Activated CD4-positive, alpha-beta memory T cell treated with anti-CD3 and anti-CD28 coated beads for 36 hours (primary cell): ENCODE measurements at regions of chr6 and their contacts with region 1.

Region 1: DNA sequence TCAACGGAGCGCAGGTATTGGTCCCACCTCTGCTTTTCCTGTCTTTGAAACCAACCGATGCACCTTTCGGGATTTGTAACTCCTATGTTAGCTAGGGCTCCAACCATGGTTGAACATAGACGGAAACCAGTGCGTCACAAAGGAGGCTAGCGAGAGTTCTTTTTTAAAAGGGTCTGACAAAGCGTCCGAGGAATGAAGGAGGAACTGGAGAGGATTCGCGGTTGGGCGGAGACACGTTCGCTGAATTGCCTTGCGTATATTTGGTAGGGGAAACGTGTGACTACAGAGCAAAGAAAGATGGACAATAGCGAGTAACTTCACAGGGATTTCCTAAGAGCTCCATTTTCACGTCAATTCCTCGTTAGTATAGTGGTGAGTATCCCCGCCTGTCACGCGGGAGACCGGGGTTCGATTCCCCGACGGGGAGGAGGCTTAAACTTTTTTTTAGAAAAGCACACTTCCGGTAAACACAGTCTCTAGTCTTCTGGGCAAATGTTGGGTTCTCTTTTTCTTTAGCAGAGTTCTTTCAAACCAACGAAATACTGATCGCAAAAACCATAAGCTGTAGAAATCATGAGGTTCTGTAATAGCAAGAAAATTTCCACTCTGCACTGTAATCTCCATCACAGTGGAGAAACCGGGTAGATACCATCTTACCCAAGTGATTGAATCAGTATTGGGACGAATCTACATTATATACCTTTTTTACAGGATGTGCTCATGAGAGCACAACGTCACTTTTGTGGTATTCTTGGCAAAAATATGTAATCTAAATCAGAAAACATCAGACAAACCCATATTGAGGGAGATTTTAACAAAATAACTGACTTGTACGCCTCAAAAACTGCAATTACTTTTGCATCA is 6.6 kb upstream of the ZNF184 start:
- DNase-seq: peak; percentile 89
- H3K4me3 Mint-ChIP-seq: no peak overlapping the region
- H3K27ac Mint-ChIP-seq: no peak overlapping the region
- H3K4me1 Mint-ChIP-seq: peaks cover 5% of the 10 kb centered on the region
- H3K27me3 Mint-ChIP-seq: no peaks in the 10 kb centered on the region

Region 2: DNA sequence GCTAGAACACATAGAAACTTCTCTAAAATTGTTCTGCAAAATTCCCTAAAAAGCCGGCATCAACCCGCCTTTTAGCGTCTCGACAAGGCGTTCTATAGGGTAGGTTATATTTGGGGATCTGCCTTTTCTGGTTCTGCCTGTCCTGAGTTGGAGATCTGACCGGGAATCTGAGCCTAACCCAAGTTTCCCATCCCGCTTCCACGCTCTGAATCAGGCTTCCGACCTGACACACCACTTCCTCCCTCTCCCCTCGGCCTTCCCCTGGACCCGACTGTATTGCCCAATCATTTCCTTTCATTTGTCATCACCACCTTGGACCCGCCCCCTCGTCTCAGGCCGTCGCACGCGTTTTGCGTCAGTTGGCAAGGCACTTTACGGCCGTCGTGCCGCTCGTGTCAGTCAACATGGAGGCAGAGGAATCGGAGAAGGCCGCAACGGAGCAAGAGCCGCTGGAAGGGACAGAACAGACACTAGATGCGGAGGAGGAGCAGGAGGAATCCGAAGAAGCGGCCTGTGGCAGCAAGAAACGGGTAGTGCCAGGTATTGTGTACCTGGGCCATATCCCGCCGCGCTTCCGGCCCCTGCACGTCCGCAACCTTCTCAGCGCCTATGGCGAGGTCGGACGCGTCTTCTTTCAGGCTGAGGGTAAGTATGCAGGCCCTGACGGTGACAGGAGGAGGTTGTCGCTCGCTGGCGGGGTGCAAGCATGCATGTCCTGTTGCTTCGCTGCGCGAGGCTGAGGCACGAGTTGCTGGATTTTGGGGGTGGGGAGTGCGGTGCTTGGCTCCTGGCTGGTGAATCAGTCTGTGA is 882.8 kb before region 1 on chr6 and contains the start of gene ABT1:
- CTCF ChIA-PET with region 1: no interaction called
- POLR2A ChIA-PET with region 1: no interaction called
- intact Hi-C with region 1: loop called (anchors 5 kb)
- DNase-seq: peak; percentile 98
- H3K4me3 Mint-ChIP-seq: no peak within 1 kb of the TSS
- H3K27ac Mint-ChIP-seq: no peak within 1 kb of the TSS
- H3K4me1 Mint-ChIP-seq: peaks cover 44% of the 10 kb centered on the region
- H3K27me3 Mint-ChIP-seq: peaks cover 26% of the 10 kb centered on the region
- total RNA-seq, gene ABT1: 22.6 to 22.7 TPM

Region 3: DNA sequence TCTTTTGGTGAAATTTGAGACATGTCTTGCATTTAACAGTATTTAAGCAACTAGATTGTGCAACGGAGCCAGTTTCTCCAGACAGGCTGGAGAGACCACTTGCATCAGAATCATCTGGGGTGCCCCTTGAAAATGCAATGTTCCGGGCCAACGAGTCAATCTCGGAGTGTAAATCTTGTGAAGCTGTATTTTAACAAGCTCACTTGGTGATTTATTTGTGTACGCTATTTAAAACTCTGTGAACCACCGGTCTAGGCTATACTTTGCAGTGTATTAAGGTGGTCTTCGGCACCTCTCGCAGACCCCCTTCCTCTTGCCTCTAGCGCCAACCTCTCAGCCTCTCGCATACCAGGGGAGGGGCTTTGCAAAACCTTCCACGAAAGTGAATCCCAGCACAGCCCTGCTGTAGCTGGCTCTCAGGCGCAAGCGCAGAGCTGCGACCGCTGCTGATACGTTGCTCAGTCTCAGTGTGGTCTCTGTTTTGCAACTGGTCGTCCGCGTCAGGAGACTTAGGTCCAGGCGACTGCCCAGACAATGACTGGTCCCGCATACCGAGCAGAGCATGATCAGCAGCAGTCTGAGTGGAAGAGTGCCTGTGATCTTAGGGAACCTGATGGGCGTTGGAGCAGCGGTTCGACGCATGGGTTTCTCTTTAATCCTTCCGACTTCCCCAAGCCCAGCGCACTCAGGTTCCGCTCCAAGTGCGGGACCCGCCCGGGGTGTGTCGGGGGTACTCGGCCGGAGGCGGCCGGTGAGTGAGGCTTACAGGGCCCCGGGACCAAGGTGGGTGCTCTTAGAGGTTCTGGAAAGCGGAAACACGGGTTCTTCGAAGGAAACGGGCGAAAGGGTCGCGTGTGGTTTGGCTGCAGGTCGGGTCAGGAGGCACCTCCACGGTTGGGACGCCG is 91.0 kb before region 1 on chr6 and contains the start of gene ZNF391:
- CTCF ChIA-PET with region 1: no interaction called
- POLR2A ChIA-PET with region 1: interaction called, 4 read pairs
- intact Hi-C with region 1: loop called (anchors 2 kb)
- DNase-seq: peak; percentile 78
- H3K4me3 Mint-ChIP-seq: peak within 1 kb of the TSS; percentile 93
- H3K27ac Mint-ChIP-seq: peak within 1 kb of the TSS; percentile 91
- H3K4me1 Mint-ChIP-seq: peaks cover 10% of the 10 kb centered on the region
- H3K27me3 Mint-ChIP-seq: no peaks in the 10 kb centered on the region
- total RNA-seq, gene ZNF391: 2.8 to 3.2 TPM

Region 4: DNA sequence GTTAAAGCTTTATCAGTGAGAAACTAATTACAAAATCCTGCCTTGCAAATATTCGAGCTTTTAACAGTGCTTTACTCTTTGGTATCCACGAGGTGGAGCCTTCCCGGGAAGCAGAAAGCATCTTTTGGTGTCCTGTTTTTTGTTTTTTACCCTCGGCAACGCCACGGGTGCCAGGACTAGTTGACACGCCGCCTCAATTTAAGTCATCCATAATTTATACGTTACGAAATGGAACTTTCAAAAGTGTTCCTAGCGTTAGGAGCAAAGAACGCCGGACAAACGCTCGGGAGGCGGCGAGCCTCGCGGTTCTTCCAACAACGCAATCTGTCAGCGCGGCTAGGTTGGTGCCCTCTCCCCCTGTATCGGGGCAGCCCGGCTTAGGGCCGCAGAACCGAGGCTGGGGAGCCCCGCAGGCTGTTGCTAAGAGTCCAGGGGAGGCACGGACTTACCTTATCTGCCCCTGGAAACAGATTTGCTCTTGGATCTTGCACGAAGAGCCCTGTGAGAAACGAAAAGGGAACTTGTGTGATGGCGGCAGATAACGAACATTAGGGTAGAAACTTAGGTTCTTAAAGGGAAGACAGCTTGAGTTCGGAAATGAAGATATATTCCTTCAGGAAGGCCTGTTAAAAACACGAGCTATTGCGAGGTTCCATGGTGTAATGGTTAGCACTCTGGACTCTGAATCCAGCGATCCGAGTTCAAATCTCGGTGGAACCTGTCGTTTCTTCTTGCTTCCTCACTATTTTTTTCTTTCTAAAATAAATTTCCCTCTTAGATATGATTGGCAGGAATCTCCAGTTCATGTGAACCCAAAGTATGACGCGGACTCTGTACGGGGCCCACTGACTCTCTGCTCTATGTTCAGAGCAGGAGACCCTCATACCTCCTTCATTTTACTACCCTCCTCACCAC is 39.6 kb after region 1 on chr6:
- CTCF ChIA-PET with region 1: interaction called, 7 read pairs
- POLR2A ChIA-PET with region 1: no interaction called
- intact Hi-C with region 1: loop called (anchors 1 kb)
- DNase-seq: peak; percentile 70
- H3K4me3 Mint-ChIP-seq: peak overlapping the region; percentile 79
- H3K27ac Mint-ChIP-seq: peak overlapping the region; percentile 77
- H3K4me1 Mint-ChIP-seq: peaks cover 19% of the 10 kb centered on the region
- H3K27me3 Mint-ChIP-seq: peaks cover 17% of the 10 kb centered on the region

Region 5: DNA sequence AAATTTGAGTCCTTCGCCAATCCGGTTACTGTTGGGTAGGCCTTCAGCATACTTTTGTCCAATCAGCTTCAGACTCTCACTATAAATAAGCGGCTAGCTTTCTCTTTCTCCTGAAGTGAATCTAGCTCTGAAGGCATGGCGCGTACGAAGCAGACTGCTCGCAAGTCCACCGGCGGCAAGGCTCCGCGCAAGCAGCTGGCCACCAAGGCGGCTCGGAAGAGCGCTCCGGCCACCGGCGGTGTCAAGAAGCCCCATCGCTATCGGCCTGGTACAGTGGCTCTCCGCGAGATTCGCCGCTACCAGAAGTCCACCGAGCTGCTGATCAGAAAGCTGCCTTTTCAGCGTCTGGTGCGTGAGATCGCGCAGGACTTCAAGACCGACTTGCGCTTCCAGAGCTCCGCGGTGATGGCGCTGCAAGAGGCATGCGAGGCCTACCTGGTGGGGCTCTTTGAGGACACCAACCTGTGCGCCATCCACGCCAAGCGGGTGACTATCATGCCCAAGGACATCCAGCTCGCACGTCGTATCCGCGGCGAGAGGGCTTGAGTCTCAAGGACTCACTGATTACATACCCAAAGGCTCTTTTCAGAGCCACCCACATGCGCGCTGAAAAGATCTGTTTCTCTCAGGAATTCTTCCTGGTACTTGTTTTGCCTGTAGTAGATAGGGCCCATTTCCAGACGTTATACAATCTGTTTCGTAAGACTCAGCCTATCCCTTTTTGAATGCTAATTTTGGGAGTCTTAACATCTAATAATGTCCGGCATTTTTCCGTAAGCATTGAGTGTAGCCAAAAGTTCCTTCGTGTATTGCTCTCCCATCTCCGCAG is 330.6 kb after region 1 on chr6:
- CTCF ChIA-PET with region 1: no interaction called
- POLR2A ChIA-PET with region 1: interaction called, 4 read pairs
- intact Hi-C with region 1: loop called (anchors 5 kb)
- DNase-seq: peak; percentile 82
- H3K4me3 Mint-ChIP-seq: peak overlapping the region; percentile 85
- H3K27ac Mint-ChIP-seq: peak overlapping the region; percentile 96
- H3K4me1 Mint-ChIP-seq: peaks cover 61% of the 10 kb centered on the region
- H3K27me3 Mint-ChIP-seq: peaks cover 4% of the 10 kb centered on the region

Region 6: DNA sequence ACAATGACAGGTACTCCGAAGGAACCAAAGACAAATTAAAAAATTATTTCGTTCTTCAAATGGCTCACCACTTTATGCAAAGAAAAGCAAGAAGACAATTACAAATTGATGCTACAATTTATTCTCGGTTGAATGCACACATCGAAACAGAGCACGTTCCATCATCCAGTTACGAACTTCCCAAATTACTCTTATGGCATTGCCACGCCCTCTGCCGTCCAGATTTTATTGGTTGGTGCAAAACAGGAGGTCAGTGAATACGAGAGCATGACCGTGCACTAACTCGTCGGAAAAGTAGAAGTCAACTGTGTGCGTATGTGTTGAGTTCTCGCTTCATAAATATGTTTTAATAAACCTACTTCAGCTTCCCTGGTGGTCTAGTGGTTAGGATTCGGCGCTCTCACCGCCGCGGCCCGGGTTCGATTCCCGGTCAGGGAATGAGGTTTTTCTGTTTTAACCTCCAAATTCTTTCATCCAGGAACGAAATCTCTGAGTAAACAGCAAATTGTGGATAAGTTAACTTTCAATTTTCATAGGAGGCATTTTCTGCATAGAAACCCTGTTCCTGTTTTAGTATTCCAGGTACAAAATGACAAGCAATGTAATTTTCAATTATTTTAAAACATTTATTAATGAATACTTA is 1502.4 kb after region 1 on chr6:
- CTCF ChIA-PET with region 1: no interaction called
- POLR2A ChIA-PET with region 1: no interaction called
- intact Hi-C with region 1: loop called (anchors 2 kb)
- DNase-seq: peak; percentile 80
- H3K4me3 Mint-ChIP-seq: peak overlapping the region; percentile 82
- H3K27ac Mint-ChIP-seq: peak overlapping the region; percentile 93
- H3K4me1 Mint-ChIP-seq: peaks cover 58% of the 10 kb centered on the region
- H3K27me3 Mint-ChIP-seq: peaks cover 27% of the 10 kb centered on the region